HCT116 (cell line): ENCODE measurements at regions of chr5 and their contacts with region 1.

Region 1: GRCh38 chr5:126544087-126544740 is 50.8 kb downstream of the ALDH7A1 start:
- DNase-seq: peak; percentile 19
- ATAC-seq: peak; percentile 79
- H3K4me3 ChIP-seq: no peak overlapping the region
- H3K27ac ChIP-seq: no peak overlapping the region
- H3K4me1 ChIP-seq: no peaks in the 10 kb centered on the region
- H3K27me3 ChIP-seq: no peaks in the 10 kb centered on the region
- CTCF ChIP-seq: peak; percentile 63 to 76 (median 68); a peak in 5 of 6 replicates
- POLR2A ChIP-seq: no peak
- RAD21 ChIP-seq: peak; percentile 56

Region 2: GRCh38 chr5:126339215-126339805 is 204.9 kb before region 1 on chr5:
- CTCF ChIA-PET with region 1: interaction called, 5 read pairs
- POLR2A ChIA-PET with region 1: no interaction called
- RAD21 ChIA-PET with region 1: no interaction called
- intact Hi-C with region 1: loop called (anchors 1 kb)
- DNase-seq: peak; percentile 54
- ATAC-seq: peak; percentile 74
- H3K4me3 ChIP-seq: no peak overlapping the region
- H3K27ac ChIP-seq: no peak overlapping the region
- H3K4me1 ChIP-seq: peaks cover 0 to 4% of the 10 kb centered on the region in 2 experiments; a peak in 1 of 4 replicates
- H3K27me3 ChIP-seq: no peaks in the 10 kb centered on the region
- CTCF ChIP-seq: peak; percentile 65 to 89 (median 84)
- POLR2A ChIP-seq: no peak
- RAD21 ChIP-seq: peak; percentile 90

Region 3: DNA sequence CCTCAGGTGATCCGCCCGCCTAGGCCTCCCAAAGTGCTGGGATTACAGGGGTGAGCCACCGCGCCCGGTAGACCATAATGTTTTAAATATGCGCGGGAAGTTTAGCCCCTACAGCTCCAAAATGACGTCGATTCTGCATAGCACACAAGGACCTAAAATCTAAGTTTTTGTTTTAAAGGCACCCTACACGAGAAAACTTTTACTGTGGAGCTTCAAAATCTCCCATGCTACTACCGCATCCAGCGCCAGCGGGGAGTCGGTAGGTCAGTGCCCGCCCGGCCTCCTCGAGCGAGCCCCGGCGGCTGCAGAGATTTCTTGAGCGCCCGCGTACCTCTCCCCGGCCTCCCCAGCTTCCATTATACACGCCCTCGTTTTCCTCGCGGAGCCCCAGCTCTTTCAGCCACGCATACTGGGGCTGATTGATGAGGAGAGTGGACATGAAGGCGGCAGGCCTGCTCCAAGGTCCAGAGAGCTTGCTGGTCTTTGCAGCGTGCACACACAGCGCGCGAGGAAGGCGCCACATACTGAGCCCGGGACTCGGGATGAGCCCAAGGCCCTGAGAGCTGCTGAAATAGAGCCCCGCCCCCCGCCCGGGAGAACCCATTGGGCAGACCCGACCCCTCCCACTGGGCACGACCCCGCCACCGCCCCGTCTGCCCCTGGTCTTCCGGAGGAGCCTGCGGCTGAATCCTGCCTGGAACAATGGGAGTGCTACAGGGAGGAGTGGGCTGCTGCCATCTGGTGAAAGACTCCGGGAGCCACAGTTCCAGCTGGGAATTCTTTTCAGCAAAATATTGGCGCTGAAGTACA is 50.7 kb after region 1 on chr5 and contains the start of gene ALDH7A1:
- CTCF ChIA-PET with region 1: no interaction called
- POLR2A ChIA-PET with region 1: no interaction called
- RAD21 ChIA-PET with region 1: no interaction called
- intact Hi-C with region 1: loop called (anchors 2 kb)
- DNase-seq: peak; percentile 83
- ATAC-seq: peak; percentile 94
- H3K4me3 ChIP-seq: peak within 1 kb of the TSS; percentile 73 to 86
- H3K27ac ChIP-seq: peak within 1 kb of the TSS; percentile 67
- H3K4me1 ChIP-seq: peaks cover 0 to 18% of the 10 kb centered on the region in 2 experiments; a peak in 3 of 4 replicates
- H3K27me3 ChIP-seq: no peaks in the 10 kb centered on the region
- CTCF ChIP-seq: peak; percentile 42 to 82 (median 51)
- POLR2A ChIP-seq: peak; percentile 91
- RAD21 ChIP-seq: peak; percentile 74
- total RNA-seq, gene ALDH7A1: 93.2 TPM

Region 4: GRCh38 chr5:126801992-126802294 is 257.7 kb after region 1 on chr5:
- CTCF ChIA-PET with region 1: no interaction called
- POLR2A ChIA-PET with region 1: no interaction called
- RAD21 ChIA-PET with region 1: no interaction called
- intact Hi-C with region 1: loop called (anchors 1 kb)
- DNase-seq: no peak
- ATAC-seq: no peak
- H3K4me3 ChIP-seq: no peak overlapping the region
- H3K27ac ChIP-seq: no peak overlapping the region
- H3K4me1 ChIP-seq: peaks cover 4 to 6% of the 10 kb centered on the region in 2 experiments; a peak in 2 of 4 replicates
- H3K27me3 ChIP-seq: no peaks in the 10 kb centered on the region
- CTCF ChIP-seq: peak in 2 of 3 experiments; percentile 25 to 37; a peak in 1 of 6 replicates
- POLR2A ChIP-seq: no peak
- RAD21 ChIP-seq: peak; percentile 55